ENCODE measurements at regions of chr3 and their contacts with region 1.

Region 1: DNA sequence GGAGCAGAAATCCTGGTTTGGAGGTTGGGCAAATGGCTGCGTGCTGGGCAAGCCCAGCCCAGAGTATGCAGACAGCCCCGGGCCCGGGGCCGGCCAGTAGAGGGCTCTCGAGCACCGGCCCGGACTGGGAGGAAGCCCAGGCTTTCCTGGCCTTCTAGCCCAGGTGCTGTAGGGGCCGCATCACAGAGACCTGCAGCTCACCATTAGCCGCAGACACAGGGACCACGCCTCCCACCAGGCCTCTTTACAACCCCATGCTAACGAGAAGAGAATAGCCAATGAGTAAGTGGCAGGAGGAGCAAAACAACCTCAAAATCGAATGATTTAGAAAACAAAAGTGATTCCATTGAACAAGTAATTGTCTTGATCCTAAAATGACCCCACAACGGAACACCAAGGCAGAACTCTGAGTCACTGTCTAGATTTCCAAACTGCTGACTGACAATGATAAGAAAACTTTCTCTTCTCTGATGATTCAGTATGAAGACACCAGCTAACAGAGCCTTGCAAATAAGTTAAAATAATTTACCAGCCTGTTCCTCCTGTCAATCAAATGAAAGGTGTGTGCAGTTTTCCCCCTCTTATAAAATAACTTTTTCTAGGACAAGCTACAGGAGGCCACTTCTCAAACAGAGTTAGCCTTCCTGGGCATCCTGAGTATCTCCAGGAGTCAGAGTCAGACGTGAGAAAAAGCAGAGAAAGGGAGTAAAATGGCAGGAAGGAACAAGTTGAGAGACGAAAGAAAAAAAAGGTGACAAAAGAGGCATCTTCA is 102.2 kb downstream of the DGKG start:
- DNase-seq: no peak
- H3K4me3 ChIP-seq: no peak overlapping the region
- H3K27ac ChIP-seq: peak overlapping the region in 2 of 4 donors; percentile 10 to 19
- H3K4me1 ChIP-seq: peaks cover 0 to 23% (median 6%) of the 10 kb centered on the region in 3 donors
- H3K27me3 ChIP-seq: no peaks in the 10 kb centered on the region
- CTCF ChIP-seq: peak; percentile 61 to 81 (median 78)
- POLR2A ChIP-seq: no peak

Region 2: DNA sequence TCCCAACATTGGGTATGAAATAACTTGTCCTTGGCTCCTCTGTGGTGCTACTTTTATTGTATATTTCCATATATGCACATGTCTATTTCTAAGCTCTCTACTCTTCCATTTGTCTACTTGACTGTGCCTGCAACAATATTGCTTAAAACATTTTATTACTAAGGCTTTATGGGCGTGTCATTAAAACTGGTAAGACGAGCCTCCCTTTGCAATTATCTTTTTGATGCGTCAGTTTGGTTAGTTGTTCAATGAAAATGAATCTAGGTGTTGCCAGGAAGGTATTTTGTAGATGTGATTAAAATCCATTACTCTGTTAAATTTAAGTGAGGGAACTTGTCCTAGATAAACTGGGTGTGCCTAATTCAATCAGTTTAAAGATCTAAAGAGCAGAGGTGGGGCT is 309.1 kb before region 1 on chr3:
- intact Hi-C with region 1: no loop called
- DNase-seq: no peak
- H3K4me3 ChIP-seq: no peak overlapping the region
- H3K27ac ChIP-seq: peak overlapping the region; percentile 42 to 79 (median 76)
- H3K4me1 ChIP-seq: peaks cover 0 to 30% (median 4%) of the 10 kb centered on the region in 3 donors
- H3K27me3 ChIP-seq: peaks cover 0 to 12% (median 0%) of the 10 kb centered on the region in 4 donors
- CTCF ChIP-seq: no peak
- POLR2A ChIP-seq: no peak

Region 3: GRCh38 chr3:186013312-186013711 is 246.5 kb before region 1 on chr3:
- intact Hi-C with region 1: no loop called
- DNase-seq: no peak
- H3K4me3 ChIP-seq: no peak overlapping the region
- H3K27ac ChIP-seq: no peak overlapping the region
- H3K4me1 ChIP-seq: no peaks in the 10 kb centered on the region
- H3K27me3 ChIP-seq: peaks cover 0 to 9% (median 0%) of the 10 kb centered on the region in 4 donors
- CTCF ChIP-seq: no peak
- POLR2A ChIP-seq: no peak

Region 4: GRCh38 chr3:186540221-186540834 is 280.5 kb after region 1 on chr3:
- intact Hi-C with region 1: loop called (anchors 5 kb)
- DNase-seq: no peak
- H3K4me3 ChIP-seq: peak overlapping the region in 1 of 4 donors; percentile 34
- H3K27ac ChIP-seq: peak overlapping the region in 1 of 4 donors; percentile 17
- H3K4me1 ChIP-seq: peaks cover 0 to 24% (median 3%) of the 10 kb centered on the region in 3 donors
- H3K27me3 ChIP-seq: no peaks in the 10 kb centered on the region
- CTCF ChIP-seq: peak; percentile 60 to 88 (median 82)
- POLR2A ChIP-seq: no peak